ENCODE measurements at regions of chr2 and their contacts with region 1.

Region 1: GRCh38 chr2:37231241-37232130 is at the starts of genes CEBPZ and NDUFAF7:
- DNase-seq: peak; percentile 75 to 95 (median 83)
- ATAC-seq: peak; percentile 88
- H3K4me3 ChIP-seq: peak within 1 kb of the TSS; percentile 79
- H3K4me3 Mint-ChIP-seq: no peak within 1 kb of the TSS
- H3K27ac ChIP-seq: peak within 1 kb of the TSS; percentile 85
- H3K27ac Mint-ChIP-seq: no peak within 1 kb of the TSS
- H3K4me1 ChIP-seq: peaks cover 31% of the 10 kb centered on the region
- H3K4me1 Mint-ChIP-seq: peaks cover 38% of the 10 kb centered on the region
- H3K27me3 ChIP-seq: no peaks in the 10 kb centered on the region
- H3K27me3 Mint-ChIP-seq: no peaks in the 10 kb centered on the region
- CTCF ChIP-seq: no peak
- total RNA-seq, gene CEBPZ: 92.3 to 102 TPM
- total RNA-seq, gene NDUFAF7: 21.4 to 24.1 TPM

Region 2: GRCh38 chr2:35503715-35504180 is 1727.7 kb before region 1 on chr2:
- CTCF ChIA-PET with region 1: no interaction called
- POLR2A ChIA-PET with region 1: no interaction called
- intact Hi-C with region 1: no loop called
- DNase-seq: no peak
- ATAC-seq: no peak
- H3K4me3 ChIP-seq: no peak overlapping the region
- H3K4me3 Mint-ChIP-seq: no peak overlapping the region
- H3K27ac ChIP-seq: no peak overlapping the region
- H3K27ac Mint-ChIP-seq: no peak overlapping the region
- H3K4me1 ChIP-seq: no peaks in the 10 kb centered on the region
- H3K4me1 Mint-ChIP-seq: no peaks in the 10 kb centered on the region
- H3K27me3 ChIP-seq: no peaks in the 10 kb centered on the region
- H3K27me3 Mint-ChIP-seq: no peaks in the 10 kb centered on the region
- CTCF ChIP-seq: no peak

Region 3: GRCh38 chr2:36966370-36967235 is 264.9 kb before region 1 on chr2 and contains the start of gene STRN:
- CTCF ChIA-PET with region 1: no interaction called
- POLR2A ChIA-PET with region 1: no interaction called
- intact Hi-C with region 1: loop called in 1 of 2 experiments (anchors 5 kb)
- DNase-seq: peak; percentile 93 to 99 (median 98)
- ATAC-seq: peak; percentile 88
- H3K4me3 ChIP-seq: peak within 1 kb of the TSS; percentile 86
- H3K4me3 Mint-ChIP-seq: peak within 1 kb of the TSS; percentile 99
- H3K27ac ChIP-seq: peak within 1 kb of the TSS; percentile 89 to 90
- H3K27ac Mint-ChIP-seq: peak within 1 kb of the TSS; percentile 97
- H3K4me1 ChIP-seq: peaks cover 26% of the 10 kb centered on the region
- H3K4me1 Mint-ChIP-seq: peaks cover 58% of the 10 kb centered on the region
- H3K27me3 ChIP-seq: no peaks in the 10 kb centered on the region
- H3K27me3 Mint-ChIP-seq: no peaks in the 10 kb centered on the region
- CTCF ChIP-seq: no peak
- total RNA-seq, gene STRN: 20.4 to 20.8 TPM

Region 4: DNA sequence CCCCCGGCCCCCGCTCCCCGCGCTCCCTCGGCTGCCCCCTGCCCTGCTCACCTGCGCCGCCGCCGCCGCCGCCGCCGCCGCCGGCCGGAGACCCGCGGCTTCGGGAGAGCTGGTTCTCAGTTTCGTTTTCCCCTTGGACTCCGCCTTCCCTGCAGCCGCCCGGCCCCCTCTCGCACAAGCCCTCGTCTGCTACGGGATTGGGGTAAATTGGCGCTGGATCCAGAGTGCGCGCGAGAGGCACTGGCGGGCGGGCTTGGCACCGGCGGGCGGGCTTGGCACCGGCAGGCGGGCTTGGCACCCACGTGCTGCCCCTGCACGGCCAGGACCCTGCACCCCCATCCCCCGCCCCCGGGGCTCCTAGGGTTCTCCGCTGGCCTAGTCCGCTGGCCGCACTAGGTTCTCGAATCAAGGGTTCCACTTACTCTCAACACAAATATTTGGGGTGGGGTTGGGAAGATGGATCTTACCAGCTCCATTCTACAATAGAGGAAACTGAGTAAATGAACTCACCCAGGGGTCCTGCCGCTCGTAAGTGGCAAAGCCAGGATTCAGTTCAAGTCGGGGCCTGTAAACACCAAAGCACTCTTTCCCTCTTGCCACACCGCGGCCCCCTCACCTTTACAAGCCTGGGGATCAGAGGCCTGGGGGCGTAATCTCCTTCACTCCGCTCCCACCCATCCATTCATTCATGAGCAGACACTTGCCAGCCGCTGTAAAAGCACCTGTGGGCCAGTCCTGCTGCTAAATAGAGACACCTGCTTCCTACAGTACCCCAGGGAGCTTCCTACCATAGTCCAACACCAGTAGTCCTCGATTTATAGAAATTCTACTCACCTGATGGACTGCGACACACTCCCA is 74.4 kb before region 1 on chr2 and contains the start of gene EIF2AK2:
- CTCF ChIA-PET with region 1: no interaction called
- POLR2A ChIA-PET with region 1: interaction called, 10 read pairs
- intact Hi-C with region 1: no loop called
- DNase-seq: peak; percentile 68 to 92 (median 77)
- ATAC-seq: peak; percentile 97
- H3K4me3 ChIP-seq: peak within 1 kb of the TSS; percentile 96
- H3K4me3 Mint-ChIP-seq: peak within 1 kb of the TSS; percentile 97
- H3K27ac ChIP-seq: peak within 1 kb of the TSS; percentile 44 to 64
- H3K27ac Mint-ChIP-seq: peak within 1 kb of the TSS; percentile 95
- H3K4me1 ChIP-seq: peaks cover 31% of the 10 kb centered on the region
- H3K4me1 Mint-ChIP-seq: peaks cover 49% of the 10 kb centered on the region
- H3K27me3 ChIP-seq: no peaks in the 10 kb centered on the region
- H3K27me3 Mint-ChIP-seq: no peaks in the 10 kb centered on the region
- CTCF ChIP-seq: no peak
- total RNA-seq, gene EIF2AK2: 29.1 to 31.1 TPM

Region 5: DNA sequence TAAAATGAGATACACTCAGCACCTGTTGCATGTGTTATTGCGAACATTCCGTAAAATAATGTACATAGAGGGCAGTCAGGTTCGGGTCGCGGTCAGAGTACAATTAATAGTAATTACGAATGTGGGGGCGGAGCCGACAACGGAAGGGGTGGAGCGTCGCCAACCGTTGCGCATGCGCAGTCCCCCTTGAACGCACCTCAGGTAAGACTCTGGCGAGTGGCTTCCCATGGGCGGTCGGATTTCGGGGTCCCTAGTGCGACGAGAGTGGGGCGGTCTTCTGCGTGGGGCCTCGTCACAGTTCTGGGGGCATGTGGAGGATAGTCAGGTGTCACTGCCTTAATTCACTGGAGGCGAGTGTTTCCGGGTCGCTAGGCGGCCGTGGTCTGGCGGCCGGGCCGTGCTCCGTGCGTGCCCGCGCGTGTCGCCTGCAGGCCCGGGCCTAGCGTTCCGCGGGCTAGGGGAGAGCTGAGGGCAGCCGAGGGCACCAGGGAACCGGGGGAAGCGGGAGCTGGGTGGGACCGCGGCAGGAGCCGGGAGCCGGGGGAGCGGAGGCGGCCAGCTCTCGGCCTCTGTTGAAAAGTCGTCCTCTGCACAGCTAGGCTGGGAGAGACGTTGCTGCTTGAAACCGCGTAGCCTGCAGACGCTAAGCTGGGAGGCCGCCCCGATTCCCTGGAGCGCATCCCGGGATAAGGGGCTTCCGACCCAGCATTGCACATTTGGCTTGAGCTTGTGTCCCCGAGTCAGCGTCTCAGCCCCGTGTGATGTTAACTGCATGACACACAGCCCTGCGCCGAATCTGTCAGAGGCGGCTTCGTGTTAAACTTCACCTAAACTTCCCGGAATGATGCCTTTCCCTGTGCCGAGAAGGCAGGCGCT is 34.9 kb before region 1 on chr2 and contains the start of gene CEBPZOS:
- CTCF ChIA-PET with region 1: interaction called, 5 read pairs
- POLR2A ChIA-PET with region 1: interaction called, 14 read pairs
- intact Hi-C with region 1: loop called (anchors 2 to 5 kb)
- DNase-seq: peak; percentile 81 to 94 (median 90)
- ATAC-seq: peak; percentile 87
- H3K4me3 ChIP-seq: peak within 1 kb of the TSS; percentile 87
- H3K4me3 Mint-ChIP-seq: peak within 1 kb of the TSS; percentile 99
- H3K27ac ChIP-seq: peak within 1 kb of the TSS; percentile 70 to 82
- H3K27ac Mint-ChIP-seq: peak within 1 kb of the TSS; percentile 95
- H3K4me1 ChIP-seq: peaks cover 34% of the 10 kb centered on the region
- H3K4me1 Mint-ChIP-seq: peaks cover 35% of the 10 kb centered on the region
- H3K27me3 ChIP-seq: no peaks in the 10 kb centered on the region
- H3K27me3 Mint-ChIP-seq: no peaks in the 10 kb centered on the region
- CTCF ChIP-seq: no peak
- total RNA-seq, gene CEBPZOS: 23.4 to 24.6 TPM

Region 6: GRCh38 chr2:37324786-37325624 is 93.5 kb after region 1 on chr2 and contains the start of gene PRKD3:
- CTCF ChIA-PET with region 1: interaction called, 4 read pairs
- POLR2A ChIA-PET with region 1: interaction called, 26 read pairs
- intact Hi-C with region 1: loop called in 1 of 2 experiments (anchors 5 kb)
- DNase-seq: peak in 10 of 14 experiments; percentile 20 to 82 (median 48)
- ATAC-seq: peak; percentile 59
- H3K4me3 ChIP-seq: peak within 1 kb of the TSS; percentile 86
- H3K4me3 Mint-ChIP-seq: peak within 1 kb of the TSS; percentile 100
- H3K27ac ChIP-seq: peak within 1 kb of the TSS; percentile 34 to 56
- H3K27ac Mint-ChIP-seq: peak within 1 kb of the TSS; percentile 97
- H3K4me1 ChIP-seq: peaks cover 23% of the 10 kb centered on the region
- H3K4me1 Mint-ChIP-seq: peaks cover 41% of the 10 kb centered on the region
- H3K27me3 ChIP-seq: peaks cover 0 to 5% of the 10 kb centered on the region in 2 experiments
- H3K27me3 Mint-ChIP-seq: peaks cover 12% of the 10 kb centered on the region
- CTCF ChIP-seq: no peak
- total RNA-seq, gene PRKD3: 40.5 to 44.1 TPM